PC-9 (cell line): ENCODE measurements at regions of chr16 and their contacts with region 1.

Region 1: DNA sequence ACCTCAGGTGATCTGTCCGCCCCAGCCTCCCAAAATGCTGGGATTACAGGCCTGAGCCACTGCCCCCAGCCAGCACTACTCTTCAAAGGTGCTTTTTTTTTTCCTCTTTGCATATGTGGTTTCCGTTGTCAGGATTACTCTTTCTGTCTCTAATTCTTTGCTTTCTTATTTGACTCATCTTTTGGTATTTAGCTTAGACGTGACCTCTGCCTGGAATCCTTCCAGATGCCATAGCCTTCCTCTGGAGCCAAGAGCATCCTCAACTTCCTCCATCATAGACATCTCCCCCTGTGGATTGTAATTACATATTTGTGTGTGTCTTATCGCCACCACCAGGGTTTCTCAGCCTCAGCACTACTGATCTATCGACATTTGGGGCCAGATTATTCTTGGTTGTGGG is 84.4 kb upstream of the XYLT1 start:
- DNase-seq: peak in 1 of 2 experiments; percentile 30
- H3K4me3 ChIP-seq: no peak overlapping the region
- H3K27ac ChIP-seq: no peak overlapping the region
- H3K4me1 ChIP-seq: no peaks in the 10 kb centered on the region
- H3K27me3 ChIP-seq: no peaks in the 10 kb centered on the region
- CTCF ChIP-seq: no peak

Region 2: DNA sequence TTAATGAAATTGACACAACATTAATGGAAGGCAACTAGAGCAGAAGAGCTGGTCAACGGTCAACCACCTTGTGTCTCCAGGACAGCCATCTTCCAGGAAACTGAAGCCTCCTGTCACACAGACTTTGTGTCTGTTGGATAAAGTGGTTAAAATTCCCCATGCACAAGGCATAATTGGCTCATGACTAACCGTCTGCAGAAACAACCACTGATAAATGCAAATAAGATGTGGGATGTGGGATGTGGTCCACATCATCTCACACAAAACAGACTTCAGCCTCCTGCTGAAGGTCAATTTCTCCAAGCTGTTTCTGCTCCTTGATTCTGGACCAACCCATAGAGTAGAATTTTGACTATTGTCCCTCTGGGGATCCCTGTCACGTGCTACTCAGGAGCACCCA is 57.5 kb before region 1 on chr16:
- CTCF ChIA-PET with region 1: no interaction called
- POLR2A ChIA-PET with region 1: no interaction called
- intact Hi-C with region 1: no loop called
- DNase-seq: no peak
- H3K4me3 ChIP-seq: no peak overlapping the region
- H3K27ac ChIP-seq: no peak overlapping the region
- H3K4me1 ChIP-seq: no peaks in the 10 kb centered on the region
- H3K27me3 ChIP-seq: no peaks in the 10 kb centered on the region
- CTCF ChIP-seq: no peak

Region 3: DNA sequence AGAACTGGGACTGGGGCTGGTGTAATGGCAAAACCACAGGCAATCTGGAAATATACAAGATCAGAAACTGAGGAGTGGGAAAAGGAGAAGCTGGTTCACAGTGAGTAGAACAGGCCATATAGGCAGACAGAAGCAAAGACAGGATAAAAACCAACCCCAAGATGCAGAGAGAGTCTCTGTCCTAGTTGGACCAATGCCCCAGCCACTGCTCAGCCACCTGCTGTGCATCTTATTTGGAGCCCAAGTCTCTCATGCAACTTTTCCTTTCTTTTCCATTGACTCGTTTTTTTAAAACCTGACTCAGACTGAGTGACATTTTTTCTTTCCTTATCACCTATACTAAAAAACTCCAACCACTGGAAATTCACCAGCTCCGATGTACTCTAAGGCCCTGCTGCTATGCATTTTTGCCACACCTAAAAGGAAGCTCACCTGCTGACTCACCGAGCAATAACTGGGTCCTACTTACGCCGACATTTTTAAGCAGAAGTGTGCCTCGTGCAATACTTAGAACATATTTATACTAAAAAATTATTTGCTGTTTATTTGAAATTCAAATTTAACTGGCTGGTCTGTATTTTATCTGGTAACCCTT is 16.4 kb after region 1 on chr16:
- CTCF ChIA-PET with region 1: no interaction called
- POLR2A ChIA-PET with region 1: interaction called, 10 read pairs
- intact Hi-C with region 1: no loop called
- DNase-seq: peak; percentile 49 to 62
- H3K4me3 ChIP-seq: no peak overlapping the region
- H3K27ac ChIP-seq: peak overlapping the region; percentile 65
- H3K4me1 ChIP-seq: no peaks in the 10 kb centered on the region
- H3K27me3 ChIP-seq: no peaks in the 10 kb centered on the region
- CTCF ChIP-seq: no peak